Posterior vena cava (tissue), 2 donors: ENCODE measurements at regions of chr2 and their contacts with region 1.

Region 1: DNA sequence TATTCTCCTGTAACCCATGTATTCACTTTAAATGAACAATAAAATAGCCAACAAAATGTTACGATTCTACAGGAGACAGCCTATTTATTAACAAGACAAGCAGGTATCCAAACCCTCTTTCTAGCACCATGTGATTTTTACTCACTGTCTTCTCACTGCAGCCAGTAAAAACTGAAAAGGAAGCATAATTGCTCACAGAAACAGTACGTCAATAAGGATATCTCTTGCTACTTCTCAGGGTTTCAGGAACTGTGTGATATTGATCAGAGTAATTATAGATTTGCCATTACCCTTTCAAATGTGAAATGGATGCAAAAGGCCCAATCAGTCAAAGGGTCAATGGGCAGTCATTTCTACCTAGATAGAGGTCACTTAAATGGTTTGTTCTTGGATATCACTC is 1473.8 kb upstream of the DDX18 start:
- DNase-seq: no peak

Region 2: DNA sequence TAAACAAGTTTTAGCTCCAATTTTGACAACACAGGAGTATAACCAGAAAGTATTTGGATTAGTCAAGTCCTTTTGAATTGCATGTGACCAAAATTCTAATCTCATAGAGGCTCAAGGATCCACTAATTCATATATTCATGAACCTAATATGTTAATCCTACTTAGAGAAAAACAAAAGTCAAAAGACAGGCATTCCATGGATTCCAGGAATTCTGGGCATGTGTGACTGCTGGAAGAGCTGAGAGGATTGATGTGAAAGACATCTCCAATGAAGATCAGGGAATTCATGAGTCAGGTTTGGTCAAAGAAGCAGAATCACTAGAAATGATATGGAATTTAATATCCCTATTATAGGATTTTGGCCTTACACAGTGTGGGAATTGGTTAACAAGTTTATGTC is 20.8 kb before region 1 on chr2:
- intact Hi-C with region 1: loop called in 1 of 2 experiments (anchors 1 kb)
- DNase-seq: no peak